Endothelial cell of umbilical vein (primary cell): ENCODE measurements at regions of chr3 and their contacts with region 1.

Region 1: GRCh38 chr3:156787926-156788663 is 38.1 kb upstream of the LEKR1 start:
- DNase-seq: peak; percentile 43
- H3K4me3 ChIP-seq: no peak overlapping the region
- H3K27ac ChIP-seq: peak overlapping the region; percentile 61
- H3K4me1 ChIP-seq: peaks cover 40% of the 10 kb centered on the region
- H3K27me3 ChIP-seq: no peaks in the 10 kb centered on the region
- CTCF ChIP-seq: no peak
- POLR2A ChIP-seq: no peak

Region 2: DNA sequence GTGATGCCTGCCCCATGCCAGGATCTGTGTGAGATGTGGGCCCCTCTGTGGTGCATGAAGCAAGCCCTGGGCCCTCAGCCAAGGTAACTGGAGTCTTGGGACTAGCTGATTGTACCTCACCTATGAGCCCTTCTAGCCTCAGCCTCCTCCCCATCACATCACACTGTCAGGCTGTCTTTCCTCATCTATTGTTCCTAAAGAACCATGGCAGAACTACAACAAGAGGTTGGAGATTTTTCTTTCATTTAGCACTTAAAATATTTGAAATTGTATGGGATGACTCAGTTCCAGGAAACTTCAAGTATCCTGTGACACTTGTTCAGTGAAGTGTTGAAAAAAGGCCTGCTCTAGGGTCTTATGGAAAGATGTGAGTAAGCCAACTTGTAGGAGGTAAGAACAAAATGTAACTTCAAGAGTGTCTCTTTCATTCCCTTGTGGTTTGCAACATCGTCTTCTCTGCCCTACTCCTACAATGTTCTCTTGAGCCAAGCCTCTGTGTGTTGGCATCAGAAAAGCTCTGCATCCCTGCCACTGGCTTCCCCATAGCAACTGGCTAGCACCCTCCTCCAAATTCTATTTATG is 172.4 kb before region 1 on chr3:
- CTCF ChIA-PET with region 1: no interaction called
- POLR2A ChIA-PET with region 1: no interaction called
- dilution Hi-C with region 1: no loop called
- intact Hi-C with region 1: no loop called
- DNase-seq: peak; percentile 67
- H3K4me3 ChIP-seq: no peak overlapping the region
- H3K27ac ChIP-seq: no peak overlapping the region
- H3K4me1 ChIP-seq: peaks cover 11% of the 10 kb centered on the region
- H3K27me3 ChIP-seq: no peaks in the 10 kb centered on the region
- CTCF ChIP-seq: no peak
- POLR2A ChIP-seq: no peak

Region 3: GRCh38 chr3:156816800-156817645 is 28.9 kb after region 1 on chr3:
- CTCF ChIA-PET with region 1: interaction called, 3 read pairs
- POLR2A ChIA-PET with region 1: no interaction called
- dilution Hi-C with region 1: no loop called
- intact Hi-C with region 1: loop called (anchors 1 kb)
- DNase-seq: peak; percentile 86
- H3K4me3 ChIP-seq: peak overlapping the region in 2 of 3 experiments; percentile 37
- H3K27ac ChIP-seq: peak overlapping the region; percentile 91
- H3K4me1 ChIP-seq: peaks cover 56% of the 10 kb centered on the region
- H3K27me3 ChIP-seq: no peaks in the 10 kb centered on the region
- CTCF ChIP-seq: no peak
- POLR2A ChIP-seq: no peak

Region 4: DNA sequence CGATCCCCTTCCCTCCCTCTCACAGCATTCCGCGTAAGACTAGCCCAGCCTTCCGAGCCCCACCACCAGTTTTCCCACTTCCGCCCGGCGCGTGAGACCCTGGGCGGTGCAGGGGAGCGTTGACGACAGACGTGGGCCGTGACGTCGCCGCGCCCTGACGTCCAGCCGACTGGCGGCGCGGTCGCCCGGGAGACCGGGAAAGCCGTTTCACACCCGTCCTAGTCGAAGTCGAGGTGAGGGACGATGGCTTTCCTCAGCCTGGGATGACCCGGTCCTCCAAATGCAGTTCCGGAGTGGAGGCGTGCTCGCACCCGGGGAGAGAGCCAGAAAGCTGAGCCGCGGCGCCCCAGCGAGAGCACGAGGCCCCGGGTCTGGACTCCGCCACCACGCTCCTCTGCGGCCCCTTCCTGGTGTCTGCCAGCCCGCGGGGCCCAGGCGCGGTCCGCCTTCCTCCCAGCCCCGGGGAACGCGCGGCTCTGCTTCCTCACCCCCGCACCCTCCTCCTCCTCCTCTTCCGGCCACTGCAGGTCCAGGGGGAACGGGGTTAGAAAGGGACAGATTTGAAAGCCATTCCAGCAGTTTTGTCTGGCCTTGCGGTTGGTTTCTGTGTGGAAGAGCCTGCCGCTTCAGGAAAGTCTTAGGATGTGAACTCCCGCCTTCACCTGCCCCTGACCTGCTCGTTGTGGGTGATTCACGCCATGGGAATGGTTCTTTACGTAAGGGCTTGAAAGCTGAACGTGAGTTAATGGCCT is 38.2 kb after region 1 on chr3 and contains the start of gene LEKR1:
- CTCF ChIA-PET with region 1: no interaction called
- POLR2A ChIA-PET with region 1: no interaction called
- dilution Hi-C with region 1: no loop called
- intact Hi-C with region 1: loop called (anchors 1 kb)
- DNase-seq: peak; percentile 89
- H3K4me3 ChIP-seq: peak within 1 kb of the TSS; percentile 45 to 90 (median 55)
- H3K27ac ChIP-seq: peak within 1 kb of the TSS; percentile 100
- H3K4me1 ChIP-seq: peaks cover 20% of the 10 kb centered on the region
- H3K27me3 ChIP-seq: no peaks in the 10 kb centered on the region
- CTCF ChIP-seq: no peak
- POLR2A ChIP-seq: peak; percentile 53
- total RNA-seq, gene LEKR1: 0.21 and 0.64 TPM in 2 replicates

Region 5: GRCh38 chr3:157148196-157148889 is 360.2 kb after region 1 on chr3:
- CTCF ChIA-PET with region 1: no interaction called
- POLR2A ChIA-PET with region 1: no interaction called
- dilution Hi-C with region 1: no loop called
- intact Hi-C with region 1: no loop called
- DNase-seq: no peak
- H3K4me3 ChIP-seq: no peak overlapping the region
- H3K27ac ChIP-seq: no peak overlapping the region
- H3K4me1 ChIP-seq: no peaks in the 10 kb centered on the region
- H3K27me3 ChIP-seq: no peaks in the 10 kb centered on the region
- CTCF ChIP-seq: no peak
- POLR2A ChIP-seq: no peak